ENCODE measurements at regions of chr11 and their contacts with region 1.

Region 1: GRCh38 chr11:72471005-72471898 is 36.9 kb upstream of the CLPB start:
- DNase-seq: peak; percentile 85
- H3K4me3 Mint-ChIP-seq: no peak overlapping the region
- H3K27ac Mint-ChIP-seq: no peak overlapping the region
- H3K4me1 Mint-ChIP-seq: peaks cover 10% of the 10 kb centered on the region
- H3K27me3 Mint-ChIP-seq: peaks cover 29% of the 10 kb centered on the region
- CTCF ChIP-seq: peak; percentile 80

Region 2: GRCh38 chr11:72413914-72414628 is 57.2 kb before region 1 on chr11:
- CTCF ChIA-PET with region 1: no interaction called
- POLR2A ChIA-PET with region 1: no interaction called
- intact Hi-C with region 1: no loop called
- DNase-seq: peak; percentile 85
- H3K4me3 Mint-ChIP-seq: no peak overlapping the region
- H3K27ac Mint-ChIP-seq: no peak overlapping the region
- H3K4me1 Mint-ChIP-seq: peaks cover 5% of the 10 kb centered on the region
- H3K27me3 Mint-ChIP-seq: no peaks in the 10 kb centered on the region
- CTCF ChIP-seq: peak; percentile 82

Region 3: DNA sequence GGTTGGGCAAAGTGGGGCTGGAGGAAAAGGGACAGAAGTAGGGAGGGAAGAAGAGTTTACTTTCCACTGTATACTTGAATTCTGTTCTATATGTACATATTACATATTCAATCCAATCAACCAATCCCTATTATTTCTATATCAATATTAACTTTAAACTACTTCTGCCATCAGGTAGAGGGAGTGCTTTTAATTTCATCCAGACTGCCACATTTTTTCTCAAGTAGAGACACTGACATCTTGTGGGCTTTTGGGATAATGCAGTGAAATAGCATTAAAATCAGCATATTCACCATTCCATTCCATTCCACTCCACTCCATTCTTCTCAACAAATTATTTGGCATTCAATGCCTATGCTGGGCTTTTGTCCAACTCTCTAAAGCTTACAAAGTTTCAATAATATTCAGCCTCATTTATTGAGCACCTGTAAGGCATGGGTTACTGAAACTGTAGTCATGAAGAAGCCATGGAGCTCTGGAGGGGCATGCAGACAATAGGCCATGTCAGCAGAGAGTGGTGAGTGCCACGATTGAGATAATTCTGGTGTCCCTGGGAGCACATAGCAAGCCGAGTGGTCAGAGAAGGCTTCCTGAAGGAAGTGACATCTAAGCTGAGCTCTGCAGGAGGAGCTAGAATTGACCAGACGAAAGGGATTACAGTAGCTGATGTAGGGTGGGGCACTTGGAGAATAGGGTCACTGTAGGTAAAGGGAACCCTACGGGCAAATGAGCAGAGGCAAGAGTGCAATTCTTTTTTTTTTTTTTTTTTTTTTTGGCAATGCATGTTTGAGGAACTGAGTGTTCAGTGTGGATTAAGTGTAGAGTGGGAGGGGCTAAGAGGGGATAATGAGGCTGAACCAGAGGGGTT is 24.1 kb before region 1 on chr11:
- CTCF ChIA-PET with region 1: interaction called, 11 read pairs
- POLR2A ChIA-PET with region 1: no interaction called
- intact Hi-C with region 1: no loop called
- DNase-seq: peak; percentile 66
- H3K4me3 Mint-ChIP-seq: no peak overlapping the region
- H3K27ac Mint-ChIP-seq: no peak overlapping the region
- H3K4me1 Mint-ChIP-seq: no peaks in the 10 kb centered on the region
- H3K27me3 Mint-ChIP-seq: no peaks in the 10 kb centered on the region
- CTCF ChIP-seq: peak; percentile 72

Region 4: DNA sequence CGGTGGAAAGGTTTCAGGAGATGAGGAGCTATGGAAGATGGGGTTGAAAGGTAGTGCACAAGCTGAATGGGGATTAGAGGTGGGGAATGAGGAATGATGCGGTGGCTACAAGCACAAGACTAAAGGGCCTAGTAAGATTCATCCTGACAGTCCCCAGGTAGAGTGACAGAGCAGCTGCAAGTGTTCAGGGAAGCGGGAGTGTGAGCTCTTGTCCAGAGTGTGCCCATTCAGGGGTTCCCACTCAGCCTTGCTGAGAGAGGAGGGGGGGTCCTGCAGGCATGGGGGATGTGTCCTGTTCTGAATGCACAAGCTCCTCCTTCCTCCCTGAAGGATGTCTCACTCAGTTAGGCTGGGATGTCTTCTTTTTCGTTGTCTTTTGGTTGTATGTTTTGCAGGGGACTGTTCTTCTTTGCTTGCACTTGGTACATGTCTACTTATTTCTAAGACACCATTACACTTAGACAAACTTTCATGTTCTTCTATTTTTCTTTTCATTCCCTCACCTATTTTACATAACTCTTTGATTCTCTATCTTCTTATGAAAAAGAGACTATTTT is 11.1 kb before region 1 on chr11:
- CTCF ChIA-PET with region 1: interaction called, 32 read pairs
- POLR2A ChIA-PET with region 1: interaction called, 5 read pairs
- intact Hi-C with region 1: no loop called
- DNase-seq: no peak
- H3K4me3 Mint-ChIP-seq: no peak overlapping the region
- H3K27ac Mint-ChIP-seq: no peak overlapping the region
- H3K4me1 Mint-ChIP-seq: no peaks in the 10 kb centered on the region
- H3K27me3 Mint-ChIP-seq: peaks cover 77% of the 10 kb centered on the region
- CTCF ChIP-seq: no peak

Region 5: GRCh38 chr11:72543849-72544542 is 72.7 kb after region 1 on chr11:
- CTCF ChIA-PET with region 1: no interaction called
- POLR2A ChIA-PET with region 1: no interaction called
- intact Hi-C with region 1: no loop called
- DNase-seq: no peak
- H3K4me3 Mint-ChIP-seq: no peak overlapping the region
- H3K27ac Mint-ChIP-seq: no peak overlapping the region
- H3K4me1 Mint-ChIP-seq: peaks cover under 1% of the 10 kb centered on the region
- H3K27me3 Mint-ChIP-seq: no peaks in the 10 kb centered on the region
- CTCF ChIP-seq: no peak

Region 6: DNA sequence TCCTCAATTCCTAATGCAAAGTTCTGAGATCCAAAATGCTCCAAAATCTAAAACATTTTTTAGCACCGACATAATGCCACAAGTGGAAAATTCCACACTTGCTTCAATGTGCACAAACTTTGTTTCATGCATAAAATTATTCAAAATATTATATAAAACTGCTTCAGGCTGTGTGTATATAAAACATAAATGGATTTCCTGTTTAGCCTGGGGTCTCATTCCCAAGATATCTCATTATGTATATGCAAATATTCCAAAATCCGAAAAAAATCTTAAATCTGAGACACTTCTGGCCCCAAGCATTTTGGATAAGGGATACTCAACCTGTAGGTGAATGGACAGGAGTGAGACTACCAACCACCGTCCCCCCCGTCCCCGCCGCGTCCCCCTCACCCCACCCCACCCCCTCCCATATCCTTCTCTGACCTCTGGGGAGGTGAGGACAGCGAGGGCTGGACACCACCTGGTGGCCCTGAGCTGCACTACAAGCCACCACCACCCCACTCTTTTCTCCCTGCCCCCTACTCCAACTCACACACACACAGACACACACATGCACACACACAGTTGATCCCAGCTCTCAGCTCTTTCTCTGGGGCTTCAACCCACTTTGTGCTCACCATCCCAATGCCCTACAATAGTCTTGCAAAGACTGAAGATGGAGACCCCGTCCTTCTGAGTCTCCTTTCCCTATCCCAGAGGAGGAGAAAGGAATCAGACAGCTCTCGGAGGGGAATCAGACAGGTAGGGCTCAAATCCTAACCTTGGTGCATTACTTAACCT is 102.0 kb after region 1 on chr11:
- CTCF ChIA-PET with region 1: interaction called, 59 read pairs
- POLR2A ChIA-PET with region 1: no interaction called
- intact Hi-C with region 1: loop called (anchors 1 kb)
- DNase-seq: peak; percentile 41
- H3K4me3 Mint-ChIP-seq: no peak overlapping the region
- H3K27ac Mint-ChIP-seq: no peak overlapping the region
- H3K4me1 Mint-ChIP-seq: peaks cover 39% of the 10 kb centered on the region
- H3K27me3 Mint-ChIP-seq: no peaks in the 10 kb centered on the region
- CTCF ChIP-seq: peak; percentile 67

Region 7: GRCh38 chr11:72683782-72684200 is 212.5 kb after region 1 on chr11:
- CTCF ChIA-PET with region 1: interaction called, 18 read pairs
- POLR2A ChIA-PET with region 1: interaction called, 4 read pairs
- intact Hi-C with region 1: loop called (anchors 2 kb)
- DNase-seq: peak; percentile 46
- H3K4me3 Mint-ChIP-seq: no peak overlapping the region
- H3K27ac Mint-ChIP-seq: no peak overlapping the region
- H3K4me1 Mint-ChIP-seq: no peaks in the 10 kb centered on the region
- H3K27me3 Mint-ChIP-seq: peaks cover 14% of the 10 kb centered on the region
- CTCF ChIP-seq: peak; percentile 92